ENCODE measurements at regions of chr17 and their contacts with region 1.

Region 1: GRCh38 chr17:56665864-56666263 is 72.4 kb downstream of the NOG start:
- DNase-seq: no peak
- H3K4me3 ChIP-seq: no peak overlapping the region
- H3K27ac ChIP-seq: no peak overlapping the region
- H3K4me1 ChIP-seq: no peaks in the 10 kb centered on the region
- H3K27me3 ChIP-seq: no peaks in the 10 kb centered on the region
- CTCF ChIP-seq: no peak

Region 2: GRCh38 chr17:56577843-56578204 is 88.0 kb before region 1 on chr17:
- CTCF ChIA-PET with region 1: no interaction called
- dilution Hi-C with region 1: loop called (anchors 5 kb)
- in situ Hi-C with region 1: no loop called
- intact Hi-C with region 1: no loop called
- DNase-seq: no peak
- H3K4me3 ChIP-seq: no peak overlapping the region
- H3K27ac ChIP-seq: no peak overlapping the region
- H3K4me1 ChIP-seq: no peaks in the 10 kb centered on the region
- H3K27me3 ChIP-seq: peaks cover 10% of the 10 kb centered on the region
- CTCF ChIP-seq: no peak

Region 3: DNA sequence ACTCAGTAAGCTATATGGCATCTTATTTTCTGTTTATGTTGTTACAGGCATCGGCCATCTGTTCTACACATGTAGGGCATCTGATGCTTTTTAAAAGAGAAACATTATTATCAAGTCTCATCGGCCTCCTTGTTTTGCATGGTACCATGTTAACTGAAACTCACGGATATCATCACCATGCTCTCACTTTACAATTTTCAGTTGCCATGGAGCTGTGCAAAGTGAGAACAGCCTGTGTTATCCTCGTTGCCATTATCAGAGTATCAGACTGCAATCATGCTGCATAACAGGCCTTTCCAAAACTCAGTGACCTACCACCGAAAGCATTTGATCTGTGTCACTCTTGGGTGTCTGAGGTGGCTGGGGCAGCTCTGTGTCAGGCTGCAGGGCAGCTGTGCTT is 57.6 kb after region 1 on chr17:
- CTCF ChIA-PET with region 1: no interaction called
- dilution Hi-C with region 1: loop called (anchors 5 kb)
- in situ Hi-C with region 1: no loop called
- intact Hi-C with region 1: no loop called
- DNase-seq: no peak
- H3K4me3 ChIP-seq: no peak overlapping the region
- H3K27ac ChIP-seq: no peak overlapping the region
- H3K4me1 ChIP-seq: peaks cover 5% of the 10 kb centered on the region
- H3K27me3 ChIP-seq: no peaks in the 10 kb centered on the region
- CTCF ChIP-seq: no peak